ENCODE measurements at regions of chr3 and their contacts with region 1.

Region 1: DNA sequence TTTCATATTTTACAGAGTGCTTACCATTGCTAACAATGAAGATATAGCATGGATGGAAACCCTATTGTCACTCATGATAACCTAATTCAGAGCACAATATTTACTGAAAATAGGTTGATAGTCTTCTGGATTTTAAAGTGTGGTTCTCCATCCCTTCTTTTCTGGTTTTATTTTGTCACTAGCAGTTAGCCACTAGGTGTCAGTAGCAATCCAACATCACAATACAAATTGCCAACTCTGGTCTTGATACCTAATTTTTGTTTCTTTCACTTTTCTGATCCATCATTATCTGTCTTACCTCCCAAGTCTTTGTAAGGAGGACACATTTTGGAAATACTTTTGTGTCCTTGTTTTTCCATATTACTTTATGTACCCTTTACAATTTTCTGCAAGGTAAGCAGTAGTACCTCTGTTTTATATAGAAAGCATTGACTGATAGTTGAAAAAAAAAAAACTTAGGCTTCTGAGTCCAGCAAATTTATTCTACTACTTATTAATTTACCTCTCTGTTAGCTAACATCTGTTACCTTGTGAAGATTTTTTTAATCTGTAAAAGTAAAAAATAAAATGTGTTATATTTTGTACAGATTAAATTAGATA is 28.3 kb upstream of the CRYBG3 start:
- DNase-seq: no peak
- ATAC-seq: peak; percentile 37

Region 2: GRCh38 chr3:97736928-97737327 is 56.6 kb before region 1 on chr3:
- intact Hi-C with region 1: no loop called
- DNase-seq: no peak
- ATAC-seq: no peak

Region 3: GRCh38 chr3:97940034-97940433 is 146.5 kb after region 1 on chr3:
- intact Hi-C with region 1: loop called (anchors 5 kb)
- DNase-seq: no peak
- ATAC-seq: peak; percentile 8

Region 4: DNA sequence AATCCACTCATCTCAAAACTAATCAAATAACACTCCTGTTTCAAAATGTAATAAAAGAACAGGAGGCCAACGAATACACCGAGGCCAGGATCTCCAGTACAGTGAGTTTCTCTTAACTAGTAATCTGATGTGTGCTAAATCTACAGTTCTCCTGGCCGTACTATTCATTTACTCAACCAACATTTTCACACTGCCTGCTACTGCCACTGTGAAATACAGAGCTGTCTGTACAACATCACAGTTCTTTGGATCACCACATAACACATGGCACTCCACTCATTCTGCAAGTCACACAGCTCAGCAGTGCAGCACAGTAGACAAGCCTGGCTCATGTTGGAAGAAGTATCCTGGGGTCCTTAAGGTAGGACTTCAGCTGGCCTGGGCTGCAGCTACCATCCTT is 156.8 kb after region 1 on chr3:
- intact Hi-C with region 1: no loop called
- DNase-seq: no peak
- ATAC-seq: no peak

Measured in Right ventricle myocardium inferior (tissue), 1 donor.